B cell (primary cell): ENCODE measurements at regions of chr18 and their contacts with region 1.

Region 1: DNA sequence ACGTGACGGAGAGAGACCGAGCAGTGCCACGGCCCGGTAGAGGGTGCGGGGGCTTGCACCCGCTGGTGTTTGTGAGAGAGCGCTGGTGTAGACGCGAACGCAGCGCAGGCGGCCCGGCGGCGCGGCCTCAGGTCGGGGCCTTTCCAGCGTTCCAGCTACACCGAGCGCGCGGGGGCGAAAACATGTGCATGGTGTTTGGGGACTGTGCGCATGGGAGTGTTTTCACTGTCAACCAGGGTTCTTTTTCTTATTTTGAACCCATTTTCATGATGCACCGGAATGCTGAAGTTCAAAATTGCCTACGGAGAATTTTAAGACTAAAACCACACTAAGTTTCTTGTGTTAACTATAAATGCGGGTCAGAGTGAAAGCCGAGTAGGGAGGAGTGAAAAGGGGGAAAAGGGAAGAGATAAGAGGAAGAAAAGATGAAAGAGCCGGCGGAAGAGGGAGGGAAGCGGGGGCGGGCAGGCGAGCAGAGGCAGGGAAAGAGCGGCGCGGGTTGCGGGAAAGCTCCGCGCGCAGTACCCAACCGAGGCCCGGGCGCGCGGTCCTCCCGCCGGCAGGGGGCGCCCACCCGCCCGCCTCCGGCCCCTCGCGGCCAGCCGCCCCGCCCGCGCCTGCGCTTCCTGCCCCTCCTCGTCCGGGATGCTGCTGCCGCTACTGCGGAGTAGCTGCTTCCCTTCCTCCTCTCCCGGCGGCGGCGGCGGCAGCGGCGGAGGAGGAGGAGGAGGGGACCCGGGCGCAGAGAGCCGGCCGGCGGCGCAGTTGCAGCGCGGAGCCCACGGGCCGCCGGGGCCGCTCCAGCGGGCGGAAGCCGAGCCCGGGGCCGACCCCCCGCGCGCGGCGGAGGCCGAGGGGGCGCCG is at the start of gene RAB12:
- DNase-seq: peak; percentile 90
- ATAC-seq: peak; percentile 83
- H3K4me3 ChIP-seq: peak within 1 kb of the TSS; percentile 40 to 88 (median 76)
- H3K4me3 Mint-ChIP-seq: peak within 1 kb of the TSS; percentile 91
- H3K27ac ChIP-seq: peak within 1 kb of the TSS; percentile 42 to 72
- H3K27ac Mint-ChIP-seq: peak within 1 kb of the TSS; percentile 87
- H3K4me1 ChIP-seq: peaks cover 60 to 62% of the 10 kb centered on the region in 2 donors
- H3K4me1 Mint-ChIP-seq: peaks cover 72% of the 10 kb centered on the region
- H3K27me3 ChIP-seq: no peaks in the 10 kb centered on the region
- H3K27me3 Mint-ChIP-seq: no peaks in the 10 kb centered on the region
- CTCF ChIP-seq: peak; percentile 73
- total RNA-seq, gene RAB12: 38.7 and 40.9 TPM in 2 replicates

Region 2: GRCh38 chr18:8478166-8478967 is 130.7 kb before region 1 on chr18:
- CTCF ChIA-PET with region 1: interaction called, 22 read pairs
- POLR2A ChIA-PET with region 1: no interaction called
- intact Hi-C with region 1: loop called (anchors 5 kb)
- DNase-seq: peak; percentile 74
- ATAC-seq: peak; percentile 80
- H3K4me3 ChIP-seq: no peak overlapping the region
- H3K4me3 Mint-ChIP-seq: no peak overlapping the region
- H3K27ac ChIP-seq: no peak overlapping the region
- H3K27ac Mint-ChIP-seq: no peak overlapping the region
- H3K4me1 ChIP-seq: no peaks in the 10 kb centered on the region
- H3K4me1 Mint-ChIP-seq: peaks cover 3% of the 10 kb centered on the region
- H3K27me3 ChIP-seq: peaks cover 0 to 7% (median 0%) of the 10 kb centered on the region in 4 experiments
- H3K27me3 Mint-ChIP-seq: peaks cover 47% of the 10 kb centered on the region
- CTCF ChIP-seq: peak; percentile 80

Region 3: DNA sequence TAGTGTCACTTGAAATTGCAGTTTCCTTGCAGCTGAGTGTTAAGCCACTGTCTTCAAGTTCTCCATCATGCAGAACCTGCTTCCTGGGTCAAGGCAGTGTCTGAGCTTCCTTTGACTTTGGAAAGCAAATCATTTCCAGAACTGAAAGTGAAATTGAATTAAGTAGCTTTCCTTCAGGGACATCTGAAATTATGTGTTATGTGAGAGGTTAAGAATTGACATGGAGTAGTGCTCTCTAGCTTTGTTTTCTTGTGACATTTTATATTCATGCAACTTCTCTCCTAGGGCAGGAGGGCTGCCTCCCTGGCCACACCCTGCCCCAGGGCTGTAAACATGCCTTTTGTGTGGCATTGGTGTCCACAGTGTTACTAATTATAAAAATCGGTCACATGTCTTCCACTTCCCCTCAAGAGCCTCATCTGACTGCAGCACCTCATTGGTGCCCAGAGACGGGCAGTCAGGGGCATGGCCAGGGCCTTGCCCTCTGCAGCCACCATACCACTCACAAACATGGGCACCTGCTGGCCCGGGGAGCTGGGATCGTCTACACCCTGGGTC is 14.6 kb after region 1 on chr18:
- CTCF ChIA-PET with region 1: interaction called, 13 read pairs
- POLR2A ChIA-PET with region 1: no interaction called
- intact Hi-C with region 1: no loop called
- DNase-seq: peak; percentile 39
- ATAC-seq: peak; percentile 83
- H3K4me3 ChIP-seq: peak overlapping the region in 2 of 5 experiments; percentile 26 to 45
- H3K4me3 Mint-ChIP-seq: peak overlapping the region; percentile 80
- H3K27ac ChIP-seq: peak overlapping the region; percentile 30 to 63
- H3K27ac Mint-ChIP-seq: peak overlapping the region; percentile 80
- H3K4me1 ChIP-seq: peaks cover 34 to 38% of the 10 kb centered on the region in 2 donors
- H3K4me1 Mint-ChIP-seq: peaks cover 49% of the 10 kb centered on the region
- H3K27me3 ChIP-seq: no peaks in the 10 kb centered on the region
- H3K27me3 Mint-ChIP-seq: no peaks in the 10 kb centered on the region
- CTCF ChIP-seq: no peak

Region 4: DNA sequence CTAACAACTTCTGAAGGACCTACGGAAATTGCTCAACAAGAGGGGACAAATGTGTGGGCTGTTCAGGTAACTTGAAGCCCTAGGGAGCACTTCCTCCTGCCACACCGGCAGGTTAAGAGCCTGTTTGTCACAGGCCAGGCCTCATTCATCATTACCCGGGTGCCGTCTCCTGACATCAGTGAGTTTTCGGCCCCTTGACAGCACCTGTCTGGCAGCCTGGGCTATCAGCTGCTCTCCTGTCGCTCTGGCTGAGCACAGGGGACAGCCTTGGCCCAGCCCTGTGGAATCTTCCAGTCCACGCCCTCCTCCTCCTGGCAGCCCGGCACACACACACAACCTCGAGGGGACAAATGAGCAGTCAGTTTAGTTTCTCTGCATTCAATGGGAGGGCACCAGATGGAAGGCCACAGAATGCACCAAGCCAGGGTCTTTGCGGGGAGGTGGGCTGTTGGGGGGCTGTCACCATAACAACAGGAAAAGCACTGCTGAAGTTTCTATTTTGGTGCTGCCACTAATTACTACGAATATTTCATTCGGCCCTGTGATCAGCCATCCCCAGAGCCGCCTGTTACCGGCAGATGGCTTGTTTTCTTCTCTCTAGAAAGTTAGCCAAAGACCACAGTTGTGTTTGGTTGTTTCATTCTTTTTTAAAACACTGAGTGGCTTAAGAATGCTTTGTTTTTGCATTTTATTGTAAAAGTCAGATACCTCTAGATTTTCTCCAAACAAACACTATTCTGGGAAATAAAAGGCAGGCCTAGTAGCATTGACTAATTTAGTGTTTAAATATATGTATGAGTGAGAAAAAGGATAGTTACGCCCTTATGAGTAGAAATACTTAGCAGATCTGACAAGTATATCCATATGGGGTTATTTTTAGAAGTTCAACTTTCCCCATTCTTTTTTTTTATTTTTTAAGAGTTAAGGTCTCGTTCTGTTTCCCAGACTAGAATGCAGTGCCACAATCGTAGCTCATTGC is 303.6 kb after region 1 on chr18:
- CTCF ChIA-PET with region 1: no interaction called
- POLR2A ChIA-PET with region 1: no interaction called
- intact Hi-C with region 1: loop called (anchors 2 kb)
- DNase-seq: peak; percentile 81
- ATAC-seq: peak; percentile 64
- H3K4me3 ChIP-seq: peak overlapping the region in 2 of 5 experiments; percentile 17 to 33
- H3K4me3 Mint-ChIP-seq: peak overlapping the region; percentile 88
- H3K27ac ChIP-seq: peak overlapping the region; percentile 96 to 98
- H3K27ac Mint-ChIP-seq: peak overlapping the region; percentile 99
- H3K4me1 ChIP-seq: peaks cover 51 to 54% of the 10 kb centered on the region in 2 donors
- H3K4me1 Mint-ChIP-seq: peaks cover 68% of the 10 kb centered on the region
- H3K27me3 ChIP-seq: no peaks in the 10 kb centered on the region
- H3K27me3 Mint-ChIP-seq: no peaks in the 10 kb centered on the region
- CTCF ChIP-seq: no peak

Region 5: GRCh38 chr18:10525371-10526210 is 1916.6 kb after region 1 on chr18 and contains the start of gene NAPG:
- CTCF ChIA-PET with region 1: no interaction called
- POLR2A ChIA-PET with region 1: no interaction called
- intact Hi-C with region 1: loop called (anchors 10 kb)
- DNase-seq: peak; percentile 96
- ATAC-seq: peak; percentile 90
- H3K4me3 ChIP-seq: peak within 1 kb of the TSS; percentile 79 to 94 (median 88)
- H3K4me3 Mint-ChIP-seq: peak within 1 kb of the TSS; percentile 99
- H3K27ac ChIP-seq: peak within 1 kb of the TSS; percentile 77 to 80
- H3K27ac Mint-ChIP-seq: peak within 1 kb of the TSS; percentile 96
- H3K4me1 ChIP-seq: peaks cover 20 to 39% of the 10 kb centered on the region in 2 donors
- H3K4me1 Mint-ChIP-seq: peaks cover 51% of the 10 kb centered on the region
- H3K27me3 ChIP-seq: no peaks in the 10 kb centered on the region
- H3K27me3 Mint-ChIP-seq: no peaks in the 10 kb centered on the region
- CTCF ChIP-seq: no peak
- total RNA-seq, gene NAPG: 31.8 and 38.7 TPM in 2 replicates